HCT116 (cell line): ENCODE measurements at regions of chr12 and their contacts with region 1.

Region 1: GRCh38 chr12:130335517-130336392 is 1.9 kb upstream of the PIWIL1 start:
- DNase-seq: peak; percentile 40
- ATAC-seq: peak; percentile 62
- H3K4me3 ChIP-seq: no peak overlapping the region
- H3K27ac ChIP-seq: no peak overlapping the region
- H3K4me1 ChIP-seq: no peaks in the 10 kb centered on the region
- H3K27me3 ChIP-seq: no peaks in the 10 kb centered on the region
- CTCF ChIP-seq: peak; percentile 28 to 68 (median 33); a peak in 5 of 6 replicates
- POLR2A ChIP-seq: no peak
- RAD21 ChIP-seq: peak; percentile 62

Region 2: DNA sequence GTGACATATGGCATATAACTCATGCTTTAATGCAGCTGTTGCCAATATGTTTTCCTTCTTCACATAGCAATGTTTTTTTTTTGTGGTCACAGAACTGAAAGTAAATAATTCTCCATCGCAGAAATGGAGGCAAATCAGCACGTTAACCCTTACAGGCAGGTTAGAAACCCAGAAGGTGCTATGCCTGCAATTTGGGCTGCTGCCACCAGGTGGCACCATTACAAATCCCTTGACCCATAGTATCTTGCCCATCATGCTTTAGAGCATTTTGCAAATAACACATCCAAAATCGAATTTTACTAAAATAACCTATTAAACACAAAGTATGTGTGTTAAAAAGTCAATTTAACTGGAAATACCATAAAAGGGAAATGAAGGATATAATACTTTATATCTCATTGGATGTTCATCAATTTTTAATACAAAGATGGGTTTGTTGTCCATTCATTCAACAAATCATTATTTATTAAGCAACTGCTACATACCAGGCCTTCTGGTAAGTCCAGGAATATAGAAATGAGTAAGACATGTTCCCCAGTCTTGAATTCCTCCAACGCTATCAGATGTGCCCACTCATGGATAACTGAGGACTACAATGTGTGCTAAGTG is 1142.4 kb before region 1 on chr12:
- CTCF ChIA-PET with region 1: no interaction called
- POLR2A ChIA-PET with region 1: no interaction called
- RAD21 ChIA-PET with region 1: no interaction called
- intact Hi-C with region 1: loop called (anchors 10 kb)
- DNase-seq: no peak
- ATAC-seq: no peak
- H3K4me3 ChIP-seq: no peak overlapping the region
- H3K27ac ChIP-seq: no peak overlapping the region
- H3K4me1 ChIP-seq: no peaks in the 10 kb centered on the region
- H3K27me3 ChIP-seq: no peaks in the 10 kb centered on the region
- CTCF ChIP-seq: peak in 2 of 3 experiments; percentile 72; a peak in 4 of 6 replicates
- POLR2A ChIP-seq: no peak
- RAD21 ChIP-seq: no peak

Region 3: GRCh38 chr12:129971721-129972120 is 364.0 kb before region 1 on chr12:
- CTCF ChIA-PET with region 1: no interaction called
- POLR2A ChIA-PET with region 1: no interaction called
- RAD21 ChIA-PET with region 1: no interaction called
- intact Hi-C with region 1: no loop called
- DNase-seq: no peak
- ATAC-seq: no peak
- H3K4me3 ChIP-seq: no peak overlapping the region
- H3K27ac ChIP-seq: no peak overlapping the region
- H3K4me1 ChIP-seq: no peaks in the 10 kb centered on the region
- H3K27me3 ChIP-seq: no peaks in the 10 kb centered on the region
- CTCF ChIP-seq: no peak
- POLR2A ChIP-seq: no peak
- RAD21 ChIP-seq: no peak

Region 4: GRCh38 chr12:130026608-130027176 is 309.1 kb before region 1 on chr12:
- CTCF ChIA-PET with region 1: no interaction called
- POLR2A ChIA-PET with region 1: no interaction called
- RAD21 ChIA-PET with region 1: no interaction called
- intact Hi-C with region 1: loop called (anchors 5 kb)
- DNase-seq: no peak
- ATAC-seq: no peak
- H3K4me3 ChIP-seq: no peak overlapping the region
- H3K27ac ChIP-seq: no peak overlapping the region
- H3K4me1 ChIP-seq: no peaks in the 10 kb centered on the region
- H3K27me3 ChIP-seq: no peaks in the 10 kb centered on the region
- CTCF ChIP-seq: peak in 2 of 3 experiments; percentile 56 to 58; a peak in 4 of 6 replicates
- POLR2A ChIP-seq: no peak
- RAD21 ChIP-seq: peak; percentile 28; the same call in 1 of the 2 replicates

Region 5: GRCh38 chr12:130041983-130042812 is 293.6 kb before region 1 on chr12:
- CTCF ChIA-PET with region 1: no interaction called
- POLR2A ChIA-PET with region 1: no interaction called
- RAD21 ChIA-PET with region 1: no interaction called
- intact Hi-C with region 1: loop called (anchors 1 kb)
- DNase-seq: no peak
- ATAC-seq: no peak
- H3K4me3 ChIP-seq: no peak overlapping the region
- H3K27ac ChIP-seq: no peak overlapping the region
- H3K4me1 ChIP-seq: no peaks in the 10 kb centered on the region
- H3K27me3 ChIP-seq: no peaks in the 10 kb centered on the region
- CTCF ChIP-seq: peak in 2 of 3 experiments; percentile 28; a peak in 4 of 6 replicates
- POLR2A ChIP-seq: no peak
- RAD21 ChIP-seq: no peak

Region 6: DNA sequence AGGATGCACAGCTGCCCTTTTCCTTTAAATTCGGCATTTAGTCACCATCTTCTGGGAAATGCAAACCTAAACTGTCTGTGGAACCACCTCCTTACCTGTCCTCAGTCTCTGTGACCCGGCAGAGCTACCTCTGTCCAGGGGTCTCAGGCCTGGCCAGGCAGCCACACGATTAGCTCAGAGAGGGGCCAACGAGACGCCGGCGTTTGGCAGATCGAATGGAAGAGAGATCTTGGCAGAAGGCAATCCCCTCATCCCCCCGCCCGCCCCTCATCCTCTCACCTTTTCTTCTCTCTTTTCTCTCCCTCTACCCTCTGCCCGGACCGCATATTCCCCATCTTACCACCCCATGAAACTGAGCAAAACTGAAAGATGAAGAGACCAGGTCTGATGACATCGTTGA is 103.0 kb after region 1 on chr12:
- CTCF ChIA-PET with region 1: no interaction called
- POLR2A ChIA-PET with region 1: no interaction called
- RAD21 ChIA-PET with region 1: no interaction called
- intact Hi-C with region 1: no loop called
- DNase-seq: no peak
- ATAC-seq: no peak
- H3K4me3 ChIP-seq: no peak overlapping the region
- H3K27ac ChIP-seq: no peak overlapping the region
- H3K4me1 ChIP-seq: no peaks in the 10 kb centered on the region
- H3K27me3 ChIP-seq: no peaks in the 10 kb centered on the region
- CTCF ChIP-seq: no peak
- POLR2A ChIP-seq: no peak
- RAD21 ChIP-seq: no peak